ENCODE measurements at regions of chr6 and their contacts with region 1.

Region 1: DNA sequence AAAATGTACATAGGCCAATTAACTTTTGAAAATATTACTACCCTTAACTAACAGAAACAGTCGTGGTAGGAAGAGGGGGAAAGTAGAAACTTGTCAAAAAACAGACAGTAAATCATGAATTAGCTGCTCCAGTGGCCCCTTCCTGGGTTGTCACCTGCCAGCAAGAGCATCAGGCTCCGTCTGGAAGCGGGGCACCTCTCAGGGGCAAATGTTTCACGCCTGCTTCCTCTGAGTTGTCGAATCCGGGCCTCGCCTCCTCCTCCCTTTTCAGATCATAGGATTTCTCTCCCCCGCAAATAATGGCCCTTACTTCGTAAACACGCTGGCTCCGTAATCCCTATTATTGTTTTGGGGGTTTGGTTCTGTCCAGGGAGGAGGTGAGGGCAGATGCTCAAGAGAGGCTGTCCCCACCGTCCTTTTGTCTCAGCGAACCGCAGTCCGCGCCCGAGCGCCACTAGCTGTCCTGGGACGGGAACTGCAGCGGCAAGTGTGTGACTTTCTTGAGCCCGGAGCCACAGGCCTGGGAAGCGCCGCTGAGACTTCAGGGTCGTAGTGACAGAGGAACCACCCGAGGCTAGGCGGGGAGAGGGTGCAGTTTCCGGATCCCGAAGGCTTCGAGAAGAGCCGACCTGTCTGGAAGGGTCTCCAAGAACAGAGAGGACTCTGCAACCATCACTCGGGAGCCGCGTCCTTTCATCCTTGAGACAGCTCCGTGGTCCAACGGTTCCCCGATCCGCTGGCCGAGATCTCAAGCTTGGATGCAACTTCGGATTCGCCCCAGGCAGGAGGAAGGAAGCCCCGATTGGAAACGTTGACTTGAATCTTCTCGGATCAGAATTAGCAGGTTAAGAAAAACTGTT is 214.5 kb upstream of the ZNF184 start:
- DNase-seq: peak; percentile 57 to 79 (median 65)
- ATAC-seq: peak; percentile 81
- H3K4me3 ChIP-seq: peak overlapping the region; percentile 88
- H3K4me3 Mint-ChIP-seq: peak overlapping the region; percentile 87 to 96 (median 94)
- H3K27ac ChIP-seq: peak overlapping the region; percentile 61
- H3K27ac Mint-ChIP-seq: peak overlapping the region; percentile 86 to 100 (median 97)
- H3K4me1 ChIP-seq: peaks cover 4 to 6% of the 10 kb centered on the region in 2 donors
- H3K4me1 Mint-ChIP-seq: peaks cover 7 to 40% (median 27%) of the 10 kb centered on the region in 7 donors
- H3K27me3 ChIP-seq: no peaks in the 10 kb centered on the region
- H3K27me3 Mint-ChIP-seq: peaks cover 5 to 34% (median 5%) of the 10 kb centered on the region in 5 donors

Region 2: GRCh38 chr6:26312501-26313390 is 1374.6 kb before region 1 on chr6:
- CTCF ChIA-PET with region 1: no interaction called
- POLR2A ChIA-PET with region 1: no interaction called
- intact Hi-C with region 1: loop called in 1 of 2 experiments (anchors 2 kb)
- DNase-seq: peak; percentile 64 to 91 (median 86)
- ATAC-seq: peak; percentile 75
- H3K4me3 ChIP-seq: peak overlapping the region; percentile 81
- H3K4me3 Mint-ChIP-seq: peak overlapping the region; percentile 83 to 100 (median 96)
- H3K27ac ChIP-seq: peak overlapping the region; percentile 55
- H3K27ac Mint-ChIP-seq: peak overlapping the region; percentile 82 to 100 (median 96)
- H3K4me1 ChIP-seq: peaks cover 4 to 19% of the 10 kb centered on the region in 2 donors
- H3K4me1 Mint-ChIP-seq: peaks cover 5 to 51% (median 37%) of the 10 kb centered on the region in 7 donors
- H3K27me3 ChIP-seq: no peaks in the 10 kb centered on the region
- H3K27me3 Mint-ChIP-seq: peaks cover 0 to 8% (median 0%) of the 10 kb centered on the region in 5 donors

Region 3: DNA sequence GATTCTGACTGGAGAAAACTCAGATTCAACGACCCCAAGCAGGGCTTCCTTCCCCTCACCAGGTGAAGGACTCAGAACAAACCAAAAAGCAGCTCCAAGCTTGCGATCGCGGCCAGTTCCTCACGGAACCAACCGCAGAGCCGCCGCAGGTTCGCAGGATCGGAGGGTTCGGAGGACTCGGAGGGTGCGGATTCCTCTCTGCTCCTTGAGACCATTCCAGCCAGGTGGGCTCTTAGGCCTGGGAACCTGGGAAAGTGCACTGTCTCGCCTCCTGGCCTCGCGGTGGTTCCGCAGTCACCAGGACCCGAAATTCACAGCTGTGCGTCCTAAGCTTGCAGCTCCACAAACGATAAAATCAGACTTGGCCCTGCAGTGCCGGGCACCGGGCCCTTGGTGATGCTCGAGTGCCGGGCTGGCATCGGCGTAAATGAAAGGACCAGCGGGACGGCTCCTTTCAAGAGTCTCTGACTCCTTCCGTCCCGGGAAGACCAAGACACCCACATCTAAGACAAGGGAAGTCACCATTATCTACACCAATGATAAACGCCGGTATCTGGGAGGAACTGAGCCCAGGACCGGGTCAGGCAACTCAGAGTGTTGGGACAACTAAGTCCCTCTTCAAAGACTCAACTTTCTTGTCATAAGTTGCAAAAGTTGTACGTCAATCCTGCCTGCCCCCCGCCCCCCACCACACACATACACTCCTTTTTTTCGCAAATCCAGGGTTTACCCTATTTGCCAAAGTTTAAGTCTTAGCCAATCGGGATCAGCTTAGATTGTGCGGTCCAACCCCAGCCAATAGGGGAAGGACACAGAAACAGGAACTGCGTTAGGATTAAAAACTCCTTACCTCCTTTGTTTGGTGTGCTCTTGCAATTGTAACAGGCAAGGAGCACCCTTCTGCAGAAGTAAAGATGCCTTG is 509.6 kb before region 1 on chr6:
- CTCF ChIA-PET with region 1: no interaction called
- POLR2A ChIA-PET with region 1: interaction called, 3 read pairs
- intact Hi-C with region 1: loop called (anchors 1 kb)
- DNase-seq: peak; percentile 49 to 78 (median 66)
- ATAC-seq: peak; percentile 83
- H3K4me3 ChIP-seq: peak overlapping the region; percentile 99
- H3K4me3 Mint-ChIP-seq: peak overlapping the region; percentile 90 to 98 (median 96)
- H3K27ac ChIP-seq: peak overlapping the region; percentile 74
- H3K27ac Mint-ChIP-seq: peak overlapping the region; percentile 79 to 100 (median 95)
- H3K4me1 ChIP-seq: peaks cover 0 to 3% of the 10 kb centered on the region in 2 donors
- H3K4me1 Mint-ChIP-seq: peaks cover 0 to 33% (median 14%) of the 10 kb centered on the region in 7 donors
- H3K27me3 ChIP-seq: no peaks in the 10 kb centered on the region
- H3K27me3 Mint-ChIP-seq: peaks cover 0 to 37% (median 0%) of the 10 kb centered on the region in 5 donors

Region 4: DNA sequence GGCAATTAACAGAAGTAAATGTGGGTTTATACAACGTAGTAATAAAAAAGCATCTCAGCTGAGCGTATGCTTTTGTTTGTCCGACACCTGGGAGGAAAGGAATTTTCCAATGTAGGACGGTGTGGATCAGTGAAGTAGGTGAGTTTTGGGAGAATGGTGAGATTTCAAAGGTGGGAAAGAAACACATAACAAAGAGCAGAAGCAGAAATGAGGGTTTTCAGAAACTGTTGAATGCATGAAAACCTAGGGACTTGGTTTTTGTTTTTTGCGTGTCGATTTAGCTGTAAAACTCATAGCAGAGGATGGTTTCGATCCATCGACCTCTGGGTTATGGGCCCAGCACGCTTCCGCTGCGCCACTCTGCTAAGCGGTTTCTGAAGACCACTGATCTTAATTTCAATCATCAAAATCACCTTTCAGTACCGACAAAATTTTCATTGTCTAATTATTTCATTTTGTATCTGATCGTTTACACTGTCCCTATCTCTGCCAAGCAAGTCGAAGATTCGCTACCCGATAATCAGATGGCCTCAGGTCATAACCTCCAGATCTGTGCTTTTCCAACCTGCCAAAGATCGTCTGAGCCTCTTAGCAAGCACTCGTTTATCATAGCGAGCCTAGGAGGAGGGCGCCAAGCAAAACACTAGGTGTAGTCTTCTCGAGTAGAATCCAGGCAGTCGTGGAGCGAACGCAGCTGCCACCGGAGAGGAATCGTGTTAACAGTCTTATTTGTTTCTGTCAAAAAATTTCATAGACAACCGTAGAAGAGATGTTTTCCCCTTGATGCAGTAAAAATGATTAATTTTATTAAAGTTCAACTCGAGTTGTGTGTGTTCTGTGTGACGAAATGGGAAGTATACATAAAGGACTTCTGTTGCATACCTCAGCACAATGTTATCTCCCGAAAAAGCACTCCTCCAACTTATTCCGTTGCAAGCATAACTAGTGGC is 354.4 kb before region 1 on chr6:
- CTCF ChIA-PET with region 1: no interaction called
- POLR2A ChIA-PET with region 1: no interaction called
- intact Hi-C with region 1: loop called in 1 of 2 experiments (anchors 5 kb)
- DNase-seq: peak in 8 of 9 donors; percentile 18 to 79 (median 68)
- ATAC-seq: peak; percentile 74
- H3K4me3 ChIP-seq: peak overlapping the region; percentile 60
- H3K4me3 Mint-ChIP-seq: peak overlapping the region; percentile 67 to 94 (median 87)
- H3K27ac ChIP-seq: no peak overlapping the region
- H3K27ac Mint-ChIP-seq: peak overlapping the region; percentile 0 to 97 (median 84)
- H3K4me1 ChIP-seq: peaks cover 0 to 3% of the 10 kb centered on the region in 2 donors
- H3K4me1 Mint-ChIP-seq: peaks cover 7 to 21% (median 13%) of the 10 kb centered on the region in 7 donors
- H3K27me3 ChIP-seq: peaks cover 0 to 8% of the 10 kb centered on the region in 2 donors
- H3K27me3 Mint-ChIP-seq: peaks cover 21 to 53% (median 25%) of the 10 kb centered on the region in 5 donors

Region 5: DNA sequence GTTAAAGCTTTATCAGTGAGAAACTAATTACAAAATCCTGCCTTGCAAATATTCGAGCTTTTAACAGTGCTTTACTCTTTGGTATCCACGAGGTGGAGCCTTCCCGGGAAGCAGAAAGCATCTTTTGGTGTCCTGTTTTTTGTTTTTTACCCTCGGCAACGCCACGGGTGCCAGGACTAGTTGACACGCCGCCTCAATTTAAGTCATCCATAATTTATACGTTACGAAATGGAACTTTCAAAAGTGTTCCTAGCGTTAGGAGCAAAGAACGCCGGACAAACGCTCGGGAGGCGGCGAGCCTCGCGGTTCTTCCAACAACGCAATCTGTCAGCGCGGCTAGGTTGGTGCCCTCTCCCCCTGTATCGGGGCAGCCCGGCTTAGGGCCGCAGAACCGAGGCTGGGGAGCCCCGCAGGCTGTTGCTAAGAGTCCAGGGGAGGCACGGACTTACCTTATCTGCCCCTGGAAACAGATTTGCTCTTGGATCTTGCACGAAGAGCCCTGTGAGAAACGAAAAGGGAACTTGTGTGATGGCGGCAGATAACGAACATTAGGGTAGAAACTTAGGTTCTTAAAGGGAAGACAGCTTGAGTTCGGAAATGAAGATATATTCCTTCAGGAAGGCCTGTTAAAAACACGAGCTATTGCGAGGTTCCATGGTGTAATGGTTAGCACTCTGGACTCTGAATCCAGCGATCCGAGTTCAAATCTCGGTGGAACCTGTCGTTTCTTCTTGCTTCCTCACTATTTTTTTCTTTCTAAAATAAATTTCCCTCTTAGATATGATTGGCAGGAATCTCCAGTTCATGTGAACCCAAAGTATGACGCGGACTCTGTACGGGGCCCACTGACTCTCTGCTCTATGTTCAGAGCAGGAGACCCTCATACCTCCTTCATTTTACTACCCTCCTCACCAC is 168.2 kb before region 1 on chr6:
- CTCF ChIA-PET with region 1: interaction called, 5 read pairs
- POLR2A ChIA-PET with region 1: interaction called, 3 read pairs
- intact Hi-C with region 1: loop called in 1 of 2 experiments (anchors 1 kb)
- DNase-seq: peak; percentile 34 to 79 (median 68)
- ATAC-seq: peak; percentile 81
- H3K4me3 ChIP-seq: peak overlapping the region; percentile 96
- H3K4me3 Mint-ChIP-seq: peak overlapping the region; percentile 84 to 97 (median 91)
- H3K27ac ChIP-seq: peak overlapping the region; percentile 67
- H3K27ac Mint-ChIP-seq: peak overlapping the region; percentile 68 to 94 (median 84)
- H3K4me1 ChIP-seq: peaks cover 7 to 11% of the 10 kb centered on the region in 2 donors
- H3K4me1 Mint-ChIP-seq: peaks cover 0 to 31% (median 18%) of the 10 kb centered on the region in 7 donors
- H3K27me3 ChIP-seq: peaks cover 0 to 3% of the 10 kb centered on the region in 2 donors
- H3K27me3 Mint-ChIP-seq: peaks cover 0 to 40% (median 22%) of the 10 kb centered on the region in 5 donors

Region 6: GRCh38 chr6:27642744-27643456 is 44.5 kb before region 1 on chr6:
- CTCF ChIA-PET with region 1: no interaction called
- POLR2A ChIA-PET with region 1: no interaction called
- intact Hi-C with region 1: no loop called
- DNase-seq: no peak
- ATAC-seq: no peak
- H3K4me3 ChIP-seq: no peak overlapping the region
- H3K4me3 Mint-ChIP-seq: no peak overlapping the region
- H3K27ac ChIP-seq: no peak overlapping the region
- H3K27ac Mint-ChIP-seq: no peak overlapping the region
- H3K4me1 ChIP-seq: no peaks in the 10 kb centered on the region
- H3K4me1 Mint-ChIP-seq: peaks cover 0 to 2% (median 0%) of the 10 kb centered on the region in 7 donors
- H3K27me3 ChIP-seq: peaks cover 0 to 6% of the 10 kb centered on the region in 2 donors
- H3K27me3 Mint-ChIP-seq: peaks cover 10 to 80% (median 66%) of the 10 kb centered on the region in 5 donors

Region 7: DNA sequence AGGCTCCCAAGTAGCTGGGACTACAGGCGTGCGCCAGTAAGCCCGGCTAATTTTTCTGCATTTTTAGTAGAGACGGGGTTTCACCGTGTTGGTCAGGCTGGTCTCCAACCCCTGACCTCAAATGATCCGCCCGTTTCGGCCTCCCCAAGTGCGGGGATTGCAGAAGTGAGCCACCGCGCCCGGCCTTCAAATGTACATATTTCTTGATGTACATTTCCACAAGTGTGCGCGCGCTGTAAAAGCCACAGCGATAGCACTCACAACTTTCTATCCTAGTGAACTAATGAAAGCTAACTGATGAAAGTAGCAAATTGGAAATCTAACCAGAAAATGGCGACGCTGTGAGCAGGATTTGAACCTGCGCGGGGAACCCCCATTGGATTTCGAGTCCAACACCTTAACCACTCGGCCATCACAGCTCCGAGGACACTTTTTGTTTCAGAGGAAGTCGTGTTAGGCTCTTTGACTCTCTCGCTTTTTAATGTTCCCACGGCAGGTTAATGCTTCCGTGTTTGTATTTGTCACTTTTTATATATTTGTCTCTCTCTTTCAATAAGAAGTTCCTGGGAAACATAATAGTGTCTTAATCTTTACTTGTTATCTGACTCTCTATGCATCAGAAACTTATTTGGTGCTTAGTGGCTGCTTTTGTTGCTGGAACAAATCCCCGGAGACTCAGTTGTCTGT is 15.1 kb before region 1 on chr6:
- CTCF ChIA-PET with region 1: no interaction called
- POLR2A ChIA-PET with region 1: interaction called, 3 read pairs
- intact Hi-C with region 1: loop called (anchors 2 kb)
- DNase-seq: no peak
- ATAC-seq: no peak
- H3K4me3 ChIP-seq: no peak overlapping the region
- H3K4me3 Mint-ChIP-seq: peak overlapping the region in 8 of 10 donors; percentile 0 to 55 (median 18)
- H3K27ac ChIP-seq: no peak overlapping the region
- H3K27ac Mint-ChIP-seq: peak overlapping the region in 6 of 9 donors; percentile 14 to 70 (median 36)
- H3K4me1 ChIP-seq: peaks cover 0 to 8% of the 10 kb centered on the region in 2 donors
- H3K4me1 Mint-ChIP-seq: peaks cover 10 to 45% (median 32%) of the 10 kb centered on the region in 7 donors
- H3K27me3 ChIP-seq: peaks cover 29 to 54% of the 10 kb centered on the region in 2 donors
- H3K27me3 Mint-ChIP-seq: peaks cover 76 to 95% (median 89%) of the 10 kb centered on the region in 5 donors